HEK293 (cell line): ENCODE measurements at regions of chr19 and their contacts with region 1.

Region 1: DNA sequence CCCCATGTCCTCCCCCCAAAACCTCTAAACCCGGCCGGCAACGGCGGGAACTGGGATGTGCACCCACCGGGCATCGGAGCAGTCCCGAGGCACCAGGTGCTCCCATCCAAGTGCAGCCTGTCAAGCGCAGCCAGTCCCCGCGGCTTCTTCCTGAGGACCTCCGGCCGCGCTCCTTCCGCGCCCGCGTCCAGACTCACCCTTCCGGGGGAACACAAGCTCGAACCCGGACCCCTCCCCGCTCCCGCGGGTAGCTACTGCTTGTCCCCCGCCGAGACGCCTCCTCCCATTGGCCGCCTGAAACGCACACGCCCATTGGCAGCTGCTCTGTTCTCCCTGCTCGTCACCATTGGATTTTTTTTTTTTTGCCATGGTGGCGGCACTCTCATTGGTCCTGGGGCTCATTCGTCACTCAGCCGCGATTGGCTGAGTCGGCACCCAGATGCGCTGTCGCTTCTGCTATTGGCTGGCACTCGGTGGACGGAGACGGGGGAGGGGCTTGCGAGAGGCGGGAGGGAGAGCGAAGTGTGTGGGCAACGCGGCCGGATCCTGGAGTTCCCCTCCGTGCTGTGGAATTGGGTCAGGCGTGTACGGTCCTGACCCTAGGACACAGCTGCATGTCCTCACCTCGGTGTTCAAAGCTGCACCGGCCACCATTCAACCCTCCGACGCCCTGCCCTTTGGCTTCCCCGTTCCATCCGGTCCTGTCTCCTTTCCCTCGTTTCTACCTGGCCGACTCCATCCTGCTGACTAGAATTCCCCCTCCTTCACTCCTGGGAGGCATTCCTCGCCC is at the start of gene TYK2:
- H3K4me3 ChIP-seq: peak within 1 kb of the TSS; percentile 93
- H3K27ac ChIP-seq: peak within 1 kb of the TSS; percentile 71; the same call in 1 of the 2 replicates
- H3K4me1 ChIP-seq: no peaks in the 10 kb centered on the region
- CTCF ChIP-seq: no peak

Region 2: DNA sequence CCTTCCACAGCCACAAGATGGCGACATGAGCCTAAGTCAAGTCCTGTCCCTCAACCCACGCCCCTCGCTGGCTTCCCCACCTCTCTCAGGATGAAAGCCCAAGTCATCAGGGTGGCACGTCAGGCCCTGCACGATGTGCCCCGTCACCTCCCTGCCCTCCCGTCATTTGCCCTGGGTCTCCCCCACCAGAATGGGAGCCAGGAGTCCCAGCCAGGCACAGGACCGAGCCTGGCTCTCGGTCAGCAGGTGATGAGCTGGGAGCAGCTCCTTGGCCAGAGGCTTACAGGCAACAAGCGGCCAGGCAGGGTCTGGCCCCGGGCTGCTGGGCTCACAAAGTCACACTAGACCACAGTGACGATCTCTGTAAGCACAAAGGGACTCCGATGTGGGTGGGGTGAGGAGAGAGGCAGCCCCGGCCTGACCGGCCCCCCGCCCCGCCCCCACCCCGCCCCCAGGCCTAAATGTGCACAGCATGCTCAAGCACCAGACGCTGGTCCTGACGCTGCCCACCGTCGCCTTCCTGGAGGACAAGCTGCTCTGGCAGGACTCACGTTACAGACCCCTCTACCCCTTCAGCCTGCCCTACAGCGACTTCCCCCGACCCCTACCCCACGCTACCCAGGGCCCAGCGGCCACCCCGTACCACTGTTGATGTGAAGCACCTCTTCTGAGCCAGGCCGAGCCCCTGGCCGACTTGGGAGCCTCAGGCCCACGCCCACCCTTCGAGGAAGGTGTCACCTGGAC is 121.2 kb before region 1 on chr19:
- CTCF ChIA-PET with region 1: interaction called, 170 read pairs
- POLR2A ChIA-PET with region 1: interaction called, 11 read pairs
- H3K4me3 ChIP-seq: no peak overlapping the region
- H3K27ac ChIP-seq: no peak overlapping the region
- H3K4me1 ChIP-seq: no peaks in the 10 kb centered on the region
- CTCF ChIP-seq: peak; percentile 85

Region 3: DNA sequence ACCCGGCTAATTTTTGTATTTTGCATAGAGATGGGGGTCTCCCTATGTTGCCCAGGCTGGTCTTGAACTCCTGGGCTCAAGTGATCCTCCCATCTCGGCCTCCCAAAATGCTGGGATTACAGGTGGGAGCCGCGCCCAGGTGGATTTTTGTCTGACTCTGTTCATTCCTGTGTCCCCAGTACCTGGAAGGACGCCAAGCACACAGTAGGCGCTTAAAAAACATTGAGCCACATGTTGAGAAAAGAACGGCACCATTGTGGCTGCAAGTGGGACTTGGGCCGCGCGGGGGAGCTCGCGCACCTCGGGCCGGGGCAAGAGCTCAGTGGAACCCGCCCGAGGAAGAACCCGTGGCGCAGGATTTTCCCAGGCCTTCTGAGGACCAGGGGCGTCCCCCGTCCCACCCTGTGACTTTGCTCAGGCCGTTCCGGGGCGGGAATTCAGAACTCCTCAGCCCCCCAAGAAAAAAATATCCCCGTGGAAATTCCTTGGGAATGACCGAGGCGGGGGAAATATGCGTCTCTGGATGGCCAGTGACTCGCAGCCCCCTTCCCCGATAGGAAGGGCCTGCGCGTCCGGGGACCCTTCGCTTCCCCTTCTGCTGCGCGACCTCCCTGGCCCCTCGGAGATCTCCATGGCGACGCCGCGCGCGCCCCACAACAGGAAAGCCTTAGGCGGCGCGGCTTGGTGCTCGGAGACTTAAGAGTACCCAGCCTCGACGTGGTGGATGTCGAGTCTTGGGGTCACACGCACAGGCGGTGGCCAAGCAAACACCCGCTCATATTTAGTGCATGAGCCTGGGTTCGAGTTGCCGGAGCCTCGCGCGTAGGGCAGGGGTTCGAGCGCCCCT is 111.0 kb before region 1 on chr19:
- CTCF ChIA-PET with region 1: interaction called, 170 read pairs
- POLR2A ChIA-PET with region 1: interaction called, 17 read pairs
- H3K4me3 ChIP-seq: no peak overlapping the region; the same call in none of the 2 replicates
- H3K27ac ChIP-seq: no peak overlapping the region
- H3K4me1 ChIP-seq: no peaks in the 10 kb centered on the region
- CTCF ChIP-seq: peak; percentile 93

Region 4: GRCh38 chr19:10292206-10292788 is 88.2 kb before region 1 on chr19:
- CTCF ChIA-PET with region 1: no interaction called
- POLR2A ChIA-PET with region 1: interaction called, 21 read pairs
- H3K4me3 ChIP-seq: peak overlapping the region; percentile 43
- H3K27ac ChIP-seq: peak overlapping the region; percentile 6; the same call in 1 of the 2 replicates
- H3K4me1 ChIP-seq: peaks cover 4% of the 10 kb centered on the region; the same call in 1 of the 2 replicates
- CTCF ChIP-seq: no peak

Region 5: GRCh38 chr19:10332955-10333757 is 47.4 kb before region 1 on chr19 and contains the start of gene RAVER1:
- CTCF ChIA-PET with region 1: interaction called, 3 read pairs
- POLR2A ChIA-PET with region 1: interaction called, 32 read pairs
- H3K4me3 ChIP-seq: peak within 1 kb of the TSS; percentile 92
- H3K27ac ChIP-seq: peak within 1 kb of the TSS; percentile 78
- H3K4me1 ChIP-seq: no peaks in the 10 kb centered on the region
- CTCF ChIP-seq: peak; percentile 92

Region 6: DNA sequence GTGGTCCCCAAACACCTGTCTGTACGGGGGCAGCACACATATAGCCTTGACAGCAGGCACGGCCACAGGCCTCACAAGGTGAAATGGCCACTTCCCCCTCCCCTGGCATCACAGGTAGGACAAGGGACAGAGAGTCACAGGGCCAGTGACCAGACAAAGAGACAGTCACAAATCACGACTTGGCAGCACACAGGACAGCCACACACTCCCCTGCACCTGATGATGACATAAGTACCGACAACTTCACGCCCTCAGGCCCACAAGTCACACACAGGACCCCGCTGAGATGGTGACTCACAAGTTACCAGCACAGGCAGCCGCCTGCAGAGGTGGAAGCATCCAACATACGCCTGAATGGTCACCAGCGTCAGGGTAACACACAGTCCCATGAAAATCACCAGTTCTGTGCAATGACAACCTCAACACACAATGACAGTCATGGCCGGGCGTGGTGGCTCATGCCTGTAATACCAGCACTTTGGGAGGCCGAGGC is 16.7 kb before region 1 on chr19:
- CTCF ChIA-PET with region 1: no interaction called
- POLR2A ChIA-PET with region 1: interaction called, 10 read pairs
- H3K4me3 ChIP-seq: no peak overlapping the region
- H3K27ac ChIP-seq: no peak overlapping the region
- H3K4me1 ChIP-seq: no peaks in the 10 kb centered on the region
- CTCF ChIP-seq: no peak

Region 7: DNA sequence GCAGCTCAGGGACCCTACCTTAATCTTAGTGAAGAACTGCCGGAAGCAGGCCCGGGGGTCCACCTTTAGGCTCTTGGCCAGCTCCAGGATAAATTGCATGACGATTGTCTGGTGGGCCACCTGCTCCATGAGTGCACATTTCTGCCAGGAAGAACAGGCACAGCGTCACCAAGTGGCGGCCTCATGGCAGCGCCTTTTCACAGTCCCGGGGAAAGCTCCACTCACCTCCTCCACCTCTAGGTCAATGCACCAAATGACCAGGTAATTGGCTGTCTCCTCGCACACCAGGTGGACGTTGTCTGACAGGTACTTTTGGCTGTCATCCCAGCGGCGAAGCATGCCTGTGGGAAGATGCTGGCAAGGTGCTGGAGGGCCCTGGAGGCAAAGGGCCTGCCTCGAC is 14.5 kb after region 1 on chr19:
- CTCF ChIA-PET with region 1: interaction called, 10 read pairs
- POLR2A ChIA-PET with region 1: interaction called, 11 read pairs
- H3K4me3 ChIP-seq: no peak overlapping the region
- H3K27ac ChIP-seq: no peak overlapping the region
- H3K4me1 ChIP-seq: no peaks in the 10 kb centered on the region
- CTCF ChIP-seq: no peak